ENCODE measurements at regions of chr2 and their contacts with region 1.

Region 1: DNA sequence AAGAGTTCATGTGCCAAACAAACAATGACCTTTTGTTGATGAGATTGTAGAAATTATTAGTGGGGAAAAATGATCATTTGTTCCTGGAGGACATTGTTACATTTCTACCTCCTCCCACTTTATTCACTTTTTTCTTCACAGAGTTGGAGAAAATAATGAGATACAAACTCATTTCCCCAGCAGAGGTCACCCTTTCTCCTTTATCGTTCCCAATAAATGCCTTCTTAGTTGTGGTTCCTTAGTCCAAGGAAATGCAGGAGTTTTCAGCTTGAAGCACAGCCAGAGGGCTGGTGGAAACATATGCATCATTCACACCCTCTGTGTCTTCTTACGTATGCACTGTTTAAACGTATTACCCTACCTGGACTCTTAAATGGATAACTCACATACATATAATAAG is 108.8 kb downstream of the SLC4A3 start:
- DNase-seq: no peak
- ATAC-seq: peak; percentile 69
- H3K4me3 Mint-ChIP-seq: no peak overlapping the region
- H3K27ac Mint-ChIP-seq: no peak overlapping the region
- H3K4me1 Mint-ChIP-seq: peaks cover 32% of the 10 kb centered on the region
- H3K27me3 Mint-ChIP-seq: no peaks in the 10 kb centered on the region
- CTCF ChIP-seq: 0 out of 2 replicates have a peak, but pooled peaks have one; percentile 28

Region 2: DNA sequence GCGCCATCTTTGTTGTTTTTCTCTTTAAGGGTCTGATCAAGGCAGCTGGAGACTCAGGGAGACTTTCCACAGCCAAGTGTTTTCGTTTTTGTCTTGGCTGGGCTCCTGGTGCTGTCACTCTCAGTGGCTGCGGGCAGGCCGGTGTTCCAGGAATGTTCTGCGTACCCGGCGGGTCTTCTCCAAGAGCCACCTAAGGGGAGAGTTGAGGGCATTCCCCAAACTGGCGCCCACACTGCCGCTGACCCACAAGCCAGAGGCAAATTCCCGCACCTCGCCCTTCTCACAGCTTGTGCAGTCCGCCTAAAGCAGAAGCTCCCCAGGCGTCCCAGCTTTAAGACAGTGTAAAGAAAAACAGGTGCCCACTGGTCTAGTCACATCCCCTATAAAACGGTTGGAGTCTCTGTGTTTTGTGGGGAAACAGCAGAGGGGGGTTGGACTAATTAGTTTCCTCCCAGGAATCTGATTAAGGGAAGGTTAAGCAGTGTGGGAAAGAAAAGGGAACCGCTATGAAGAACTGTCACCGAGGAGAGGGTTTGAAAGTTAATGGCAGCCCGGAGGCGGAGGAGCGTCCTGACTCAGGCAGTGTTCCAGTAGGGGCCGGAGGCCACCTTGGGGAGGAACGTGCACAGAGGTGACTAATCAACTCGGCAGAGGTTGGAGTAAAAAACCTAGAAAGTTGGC is 115.7 kb after region 1 on chr2:
- CTCF ChIA-PET with region 1: interaction called, 19 read pairs
- POLR2A ChIA-PET with region 1: no interaction called
- DNase-seq: peak; percentile 22
- ATAC-seq: peak; percentile 5
- H3K4me3 Mint-ChIP-seq: peak overlapping the region; percentile 11; the same call in 1 of the 2 replicates
- H3K27ac Mint-ChIP-seq: no peak overlapping the region
- H3K4me1 Mint-ChIP-seq: peaks cover 18% of the 10 kb centered on the region
- H3K27me3 Mint-ChIP-seq: peaks cover 47% of the 10 kb centered on the region
- CTCF ChIP-seq: no peak

Region 3: GRCh38 chr2:219886615-219887014 is 150.4 kb after region 1 on chr2:
- CTCF ChIA-PET with region 1: interaction called, 12 read pairs
- POLR2A ChIA-PET with region 1: no interaction called
- DNase-seq: no peak
- ATAC-seq: peak; percentile 91
- H3K4me3 Mint-ChIP-seq: no peak overlapping the region
- H3K27ac Mint-ChIP-seq: no peak overlapping the region
- H3K4me1 Mint-ChIP-seq: no peaks in the 10 kb centered on the region
- H3K27me3 Mint-ChIP-seq: no peaks in the 10 kb centered on the region; the same call in 1 of the 2 replicates
- CTCF ChIP-seq: no peak

Region 4: DNA sequence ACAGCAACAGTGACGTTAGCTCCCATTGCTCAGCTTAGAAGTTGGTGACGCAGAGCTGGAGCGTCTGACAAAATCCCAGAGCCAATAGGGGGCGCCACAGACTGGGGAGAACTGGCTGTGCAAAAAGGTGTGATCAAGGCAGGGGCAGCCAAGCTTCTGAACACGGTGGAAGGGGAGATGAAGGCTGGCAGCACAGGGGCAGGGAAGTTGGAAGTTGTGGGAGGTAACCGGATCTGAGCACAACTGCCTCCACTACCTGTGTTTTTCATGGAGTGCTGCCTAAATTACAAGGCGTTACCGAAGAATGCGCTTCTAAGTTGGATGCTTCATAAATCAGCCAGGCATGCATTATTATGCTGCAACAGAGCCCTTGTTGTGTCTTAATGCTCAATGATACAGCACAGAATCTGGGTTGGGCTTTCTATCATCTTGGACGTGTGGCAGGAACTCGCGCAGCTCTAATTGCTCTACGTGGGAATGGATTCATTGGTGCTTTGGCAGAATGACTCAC is 261.2 kb after region 1 on chr2:
- CTCF ChIA-PET with region 1: interaction called, 38 read pairs
- POLR2A ChIA-PET with region 1: no interaction called
- DNase-seq: peak; percentile 85
- ATAC-seq: peak; percentile 86
- H3K4me3 Mint-ChIP-seq: no peak overlapping the region
- H3K27ac Mint-ChIP-seq: no peak overlapping the region
- H3K4me1 Mint-ChIP-seq: peaks cover 15% of the 10 kb centered on the region
- H3K27me3 Mint-ChIP-seq: no peaks in the 10 kb centered on the region; the same call in 1 of the 2 replicates
- CTCF ChIP-seq: peak; percentile 56; the same call in 1 of the 2 replicates

Measured in WTC11 (cell line).